ENCODE measurements at regions of chr12 and their contacts with region 1.

Region 1: DNA sequence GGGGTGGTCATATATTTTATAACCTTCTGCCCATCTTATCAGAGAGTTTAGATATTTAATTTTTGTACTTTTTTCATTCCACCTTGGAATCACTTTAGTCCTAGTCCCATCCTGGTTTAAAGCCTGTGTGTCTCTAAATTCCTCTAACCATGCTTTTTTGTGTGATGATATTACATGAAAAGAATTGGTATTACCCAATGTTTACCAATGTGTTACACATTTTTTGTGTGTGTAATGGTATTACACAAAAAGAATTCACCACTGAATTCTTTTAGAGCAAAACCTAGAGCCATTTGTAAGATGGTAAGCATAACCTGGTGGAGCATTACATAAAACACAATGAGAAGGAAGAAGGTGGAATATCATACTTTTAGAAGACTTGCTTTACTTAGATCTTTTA is 77.5 kb downstream of the FAR2 start:
- DNase-seq: no peak
- H3K4me3 ChIP-seq: no peak overlapping the region
- H3K27ac ChIP-seq: no peak overlapping the region
- H3K4me1 ChIP-seq: no peaks in the 10 kb centered on the region
- H3K27me3 ChIP-seq: no peaks in the 10 kb centered on the region
- CTCF ChIP-seq: no peak

Region 2: DNA sequence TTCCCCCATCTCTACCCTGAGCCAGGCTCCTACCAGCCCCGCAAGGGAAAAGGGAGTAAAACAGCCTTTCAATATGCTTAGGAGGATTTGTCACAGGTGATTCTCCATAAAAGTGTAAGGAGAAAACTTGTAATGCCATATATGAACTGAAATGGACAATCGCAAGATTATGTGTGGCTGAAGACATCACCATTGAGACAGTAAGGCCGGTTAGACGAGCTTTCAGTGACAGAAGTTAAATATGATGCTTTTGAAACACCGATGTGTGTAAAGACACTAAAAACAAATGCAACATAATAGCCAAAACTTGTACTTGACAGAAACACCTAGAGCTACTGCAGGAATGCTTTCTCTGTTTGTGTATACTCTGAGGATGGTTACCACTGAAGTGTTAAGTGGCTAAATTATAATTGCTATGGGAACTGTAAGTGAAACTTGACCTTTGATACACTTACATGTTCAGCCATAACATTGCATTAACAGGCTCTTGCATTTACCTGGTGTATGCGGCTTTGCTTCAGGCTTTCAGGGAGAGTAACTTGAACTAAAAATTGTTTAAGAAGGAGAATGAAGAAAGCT is 35.3 kb before region 1 on chr12:
- CTCF ChIA-PET with region 1: no interaction called
- dilution Hi-C with region 1: loop called (anchors 5 kb)
- in situ Hi-C with region 1: no loop called
- intact Hi-C with region 1: no loop called
- DNase-seq: no peak
- H3K4me3 ChIP-seq: no peak overlapping the region
- H3K27ac ChIP-seq: no peak overlapping the region
- H3K4me1 ChIP-seq: no peaks in the 10 kb centered on the region
- H3K27me3 ChIP-seq: no peaks in the 10 kb centered on the region
- CTCF ChIP-seq: no peak

Region 3: DNA sequence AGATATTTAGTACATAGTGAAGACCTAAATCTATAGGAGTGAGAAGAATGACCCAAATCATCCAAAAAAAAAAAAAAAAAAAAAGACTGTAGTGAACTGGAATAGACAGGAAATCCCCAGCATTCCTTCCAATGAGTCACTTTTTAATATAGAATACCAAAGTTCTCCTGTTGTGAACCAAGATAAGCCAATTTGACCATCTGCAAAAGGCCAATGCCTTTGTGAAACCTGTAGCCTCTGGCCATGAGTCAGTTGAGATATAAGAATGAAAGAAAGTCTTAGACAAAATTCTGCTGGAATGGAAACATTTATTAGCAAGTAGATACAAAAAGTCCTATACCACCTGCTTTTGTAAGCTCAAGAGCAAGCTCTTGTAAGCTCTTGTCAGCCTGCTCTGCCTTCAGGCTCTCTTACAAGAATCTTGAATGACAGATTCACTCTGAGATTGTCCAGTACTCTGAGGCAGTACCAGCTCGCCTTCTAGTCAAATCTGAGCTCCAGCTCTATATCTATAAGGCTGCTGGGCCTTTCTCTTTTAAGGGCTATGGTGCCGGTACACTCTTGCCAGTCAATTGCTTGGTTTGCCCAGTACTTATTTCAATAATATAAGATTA is 800.1 kb after region 1 on chr12:
- CTCF ChIA-PET with region 1: no interaction called
- dilution Hi-C with region 1: no loop called
- in situ Hi-C with region 1: no loop called
- intact Hi-C with region 1: no loop called
- DNase-seq: peak; percentile 72
- H3K4me3 ChIP-seq: no peak overlapping the region
- H3K27ac ChIP-seq: no peak overlapping the region
- H3K4me1 ChIP-seq: peaks cover 16% of the 10 kb centered on the region
- H3K27me3 ChIP-seq: no peaks in the 10 kb centered on the region
- CTCF ChIP-seq: no peak